ENCODE measurements at regions of chr9 and their contacts with region 1.

Region 1: DNA sequence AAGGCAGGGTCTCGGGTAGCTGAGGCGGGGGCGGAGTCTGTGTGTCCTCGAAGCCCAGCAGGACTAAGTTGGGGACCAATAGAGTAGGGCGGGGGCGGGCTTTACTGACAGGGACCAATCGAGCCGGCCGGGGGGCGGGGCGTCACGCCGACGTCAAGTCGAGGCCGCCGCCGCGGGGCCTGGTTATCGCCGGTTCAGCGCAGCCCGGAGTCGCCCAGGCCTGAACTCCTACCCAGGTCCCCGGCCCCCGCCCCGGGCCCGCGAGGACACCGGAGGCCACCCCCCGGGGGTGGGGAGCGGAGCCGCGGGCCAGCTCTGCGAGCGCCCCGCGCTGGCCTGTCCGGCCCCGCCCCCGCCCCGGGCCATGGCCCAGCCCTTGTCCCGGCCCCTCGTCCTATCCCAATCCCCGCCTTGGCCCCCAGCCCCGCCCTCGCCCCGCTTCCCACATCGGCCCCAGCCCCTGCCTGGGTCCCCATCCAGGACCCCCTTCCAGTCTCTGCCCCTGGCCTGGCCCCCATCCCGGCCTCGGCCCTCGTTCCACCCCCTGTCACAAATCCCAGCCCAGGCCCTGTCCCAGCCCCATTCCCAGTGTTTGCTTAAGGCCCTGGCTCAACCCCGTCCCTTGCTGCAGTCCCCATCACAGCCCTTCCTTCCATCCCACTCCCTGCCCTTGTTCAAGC is at the start of gene TMEM8B:
- DNase-seq: peak; percentile 96
- CTCF ChIP-seq: no peak

Region 2: DNA sequence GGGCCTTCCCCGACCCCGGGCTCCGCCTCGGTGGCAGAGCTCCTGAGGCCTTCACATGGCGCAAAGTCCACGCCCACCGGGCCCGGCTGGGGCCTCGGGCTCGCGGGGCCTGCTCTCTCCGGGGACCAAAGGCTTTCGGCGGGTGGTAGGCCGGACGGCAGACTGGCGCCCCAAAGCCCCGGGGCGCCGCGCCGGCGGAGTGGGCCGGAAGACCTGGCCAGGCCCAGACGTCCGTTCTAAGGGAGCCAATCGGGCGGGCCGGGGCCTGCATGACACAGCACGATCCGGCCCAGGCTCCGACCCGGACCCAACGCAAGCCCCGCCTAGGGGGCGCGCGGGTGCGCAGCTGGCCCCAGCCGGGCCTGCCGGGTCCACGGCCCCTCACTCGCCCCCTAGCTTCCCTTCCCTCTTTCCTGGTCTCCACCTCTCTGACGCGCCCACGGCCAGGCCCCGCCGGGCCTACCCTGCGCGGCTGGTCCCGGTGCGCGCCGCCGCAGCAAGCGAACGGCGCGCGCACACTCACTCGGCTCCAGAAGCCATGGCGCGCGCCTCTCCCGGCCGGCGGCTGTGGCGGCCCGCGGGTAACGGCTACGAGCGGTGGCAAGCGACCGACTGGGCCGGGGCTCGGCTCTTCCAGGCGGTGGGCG is 757.3 kb before region 1 on chr9:
- in situ Hi-C with region 1: no loop called
- DNase-seq: peak; percentile 87
- CTCF ChIP-seq: peak; percentile 52

Region 3: GRCh38 chr9:35646533-35647265 is 182.5 kb before region 1 on chr9:
- in situ Hi-C with region 1: no loop called
- DNase-seq: peak; percentile 96
- CTCF ChIP-seq: peak; percentile 99

Region 4: GRCh38 chr9:35882263-35882848 is 53.1 kb after region 1 on chr9:
- in situ Hi-C with region 1: loop called (anchors 10 kb)
- DNase-seq: peak; percentile 76
- CTCF ChIP-seq: peak; percentile 89